SK-N-SH (cell line): ENCODE measurements at regions of chr2 and their contacts with region 1.

Region 1: GRCh38 chr2:235746257-235747084 is 252.6 kb downstream of the AGAP1 start:
- DNase-seq: peak; percentile 89
- H3K4me3 ChIP-seq: no peak overlapping the region; a peak in 1 of 4 replicates
- H3K27ac ChIP-seq: no peak overlapping the region
- H3K4me1 ChIP-seq: peaks cover 0 to 5% of the 10 kb centered on the region in 2 experiments; a peak in 1 of 4 replicates
- H3K27me3 ChIP-seq: no peaks in the 10 kb centered on the region
- CTCF ChIP-seq: peak; percentile 84
- EP300 ChIP-seq: no peak
- RAD21 ChIP-seq: peak; percentile 94

Region 2: DNA sequence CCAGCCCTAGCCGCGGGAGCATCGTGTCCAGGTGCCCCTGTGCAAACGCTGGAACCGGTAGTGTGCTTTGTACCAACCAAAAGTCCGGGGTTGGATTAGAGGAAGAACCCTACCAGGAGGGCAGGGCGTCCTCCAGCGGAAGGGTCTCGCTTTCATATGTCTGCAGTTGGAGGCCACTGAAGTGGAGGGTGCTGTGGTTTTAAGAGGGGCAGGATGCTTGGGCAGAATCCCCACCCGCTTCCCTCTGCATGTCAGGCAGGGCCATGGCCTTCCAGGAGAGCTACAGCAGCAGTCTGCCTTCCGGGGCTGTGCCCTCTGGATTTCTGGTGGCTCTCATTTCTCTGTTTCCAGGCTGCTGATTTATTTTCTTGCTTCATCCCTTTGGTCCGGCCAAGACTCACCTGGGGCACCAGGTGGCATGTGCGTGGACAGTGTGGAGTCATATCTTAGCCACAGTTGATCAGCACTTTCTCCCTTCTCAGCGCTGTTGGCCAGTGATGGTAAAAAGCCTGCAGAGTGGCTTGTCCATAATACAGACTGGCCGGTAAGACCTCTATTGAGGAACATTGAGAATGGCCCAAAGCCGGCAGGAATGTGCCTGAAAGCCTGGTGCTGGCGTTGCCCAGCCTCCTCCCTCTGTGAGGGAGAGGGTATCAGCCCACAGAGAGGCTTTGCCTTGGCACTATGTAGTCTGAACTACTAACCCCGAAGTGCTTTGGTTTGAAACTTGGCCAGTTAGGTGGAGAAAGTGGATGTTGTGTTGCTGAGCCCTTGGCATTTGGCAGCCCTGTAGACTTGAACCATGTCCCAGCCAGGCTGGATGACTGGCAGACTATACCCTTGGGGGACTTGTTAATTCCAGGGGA is 250.9 kb before region 1 on chr2:
- CTCF ChIA-PET with region 1: interaction called, 14 read pairs
- POLR2A ChIA-PET with region 1: no interaction called
- DNase-seq: no peak
- H3K4me3 ChIP-seq: peak overlapping the region; percentile 72 to 77
- H3K27ac ChIP-seq: no peak overlapping the region
- H3K4me1 ChIP-seq: peaks cover 13 to 28% of the 10 kb centered on the region in 2 experiments; a peak in 2 of 4 replicates
- H3K27me3 ChIP-seq: no peaks in the 10 kb centered on the region
- CTCF ChIP-seq: no peak
- EP300 ChIP-seq: no peak
- RAD21 ChIP-seq: no peak

Region 3: GRCh38 chr2:235595422-235596010 is 151.0 kb before region 1 on chr2:
- CTCF ChIA-PET with region 1: interaction called, 301 read pairs
- POLR2A ChIA-PET with region 1: interaction called, 5 read pairs
- DNase-seq: peak; percentile 83
- H3K4me3 ChIP-seq: no peak overlapping the region; a peak in 1 of 4 replicates
- H3K27ac ChIP-seq: no peak overlapping the region
- H3K4me1 ChIP-seq: peaks cover 0 to 4% of the 10 kb centered on the region in 2 experiments; a peak in 1 of 4 replicates
- H3K27me3 ChIP-seq: no peaks in the 10 kb centered on the region
- CTCF ChIP-seq: peak; percentile 90
- EP300 ChIP-seq: no peak
- RAD21 ChIP-seq: peak; percentile 96

Region 4: GRCh38 chr2:235639428-235639773 is 107.1 kb before region 1 on chr2:
- CTCF ChIA-PET with region 1: interaction called, 20 read pairs
- POLR2A ChIA-PET with region 1: interaction called, 3 read pairs
- DNase-seq: peak; percentile 73
- H3K4me3 ChIP-seq: no peak overlapping the region
- H3K27ac ChIP-seq: peak overlapping the region; percentile 27 to 87; a peak in 3 of 4 replicates
- H3K4me1 ChIP-seq: peaks cover 16 to 55% of the 10 kb centered on the region in 2 experiments
- H3K27me3 ChIP-seq: no peaks in the 10 kb centered on the region
- CTCF ChIP-seq: no peak
- EP300 ChIP-seq: no peak
- RAD21 ChIP-seq: 0 out of 2 replicates have a peak, but pooled peaks have one; percentile 12

Region 5: DNA sequence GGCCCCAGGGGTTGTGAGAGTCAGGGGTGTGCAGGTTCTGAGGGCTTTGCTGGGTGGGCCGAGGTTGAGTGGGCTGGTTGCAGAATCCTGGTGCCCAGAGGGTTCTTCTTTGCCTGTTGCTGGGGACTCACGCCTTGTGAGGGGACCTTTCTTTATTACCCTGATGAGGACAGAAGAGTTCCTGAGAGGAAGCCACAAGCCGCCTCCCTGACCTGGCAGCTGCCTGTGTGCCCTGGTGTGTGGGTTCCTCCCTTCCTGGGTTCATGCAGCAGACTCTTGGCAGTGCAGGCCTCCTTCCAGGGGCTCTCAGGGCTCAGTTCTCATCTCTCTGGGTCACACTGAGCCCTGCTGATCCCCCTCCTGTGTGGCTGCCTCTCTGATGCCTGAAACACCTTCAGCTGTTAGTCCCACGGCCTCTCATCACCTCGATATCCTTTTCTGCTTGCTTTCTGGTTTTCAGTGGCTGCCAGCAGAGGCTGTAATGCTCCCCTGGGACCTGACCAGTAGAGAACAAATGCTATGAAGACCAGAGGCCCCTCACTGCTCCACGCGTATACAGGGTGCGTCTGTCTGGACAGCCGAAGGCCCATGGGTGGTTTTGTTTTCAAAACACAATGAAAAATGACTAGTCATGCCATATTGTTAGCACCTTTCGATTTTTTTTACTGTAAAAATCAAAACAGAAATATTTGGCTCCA is 61.3 kb before region 1 on chr2:
- CTCF ChIA-PET with region 1: interaction called, 26 read pairs
- POLR2A ChIA-PET with region 1: no interaction called
- DNase-seq: no peak
- H3K4me3 ChIP-seq: no peak overlapping the region
- H3K27ac ChIP-seq: no peak overlapping the region
- H3K4me1 ChIP-seq: peaks cover 0 to 10% of the 10 kb centered on the region in 2 experiments; a peak in 1 of 4 replicates
- H3K27me3 ChIP-seq: no peaks in the 10 kb centered on the region
- CTCF ChIP-seq: no peak
- EP300 ChIP-seq: no peak
- RAD21 ChIP-seq: no peak

Region 6: DNA sequence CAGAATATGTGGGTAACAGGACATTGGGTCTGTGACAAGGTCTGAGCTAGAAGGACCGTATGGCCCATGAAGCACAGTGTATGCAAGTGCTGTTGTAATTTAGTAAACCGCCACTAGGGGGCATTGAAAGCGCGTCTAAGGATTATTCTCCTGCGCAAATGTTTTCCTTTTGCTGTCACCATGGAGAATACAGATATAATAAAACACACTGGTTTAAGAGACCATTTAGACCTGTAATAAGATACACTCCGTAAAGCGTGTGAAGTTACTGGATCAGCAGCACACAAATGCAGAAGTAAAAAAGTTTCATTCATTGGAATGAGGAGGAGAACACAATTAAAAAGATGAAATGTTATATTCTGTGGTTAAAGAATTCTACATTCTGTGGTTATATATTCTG is 19.8 kb after region 1 on chr2:
- CTCF ChIA-PET with region 1: interaction called, 22 read pairs
- POLR2A ChIA-PET with region 1: no interaction called
- DNase-seq: peak; percentile 81
- H3K4me3 ChIP-seq: no peak overlapping the region; a peak in 1 of 4 replicates
- H3K27ac ChIP-seq: peak overlapping the region in 1 of 2 experiments; percentile 43; a peak in 1 of 4 replicates
- H3K4me1 ChIP-seq: no peaks in the 10 kb centered on the region
- H3K27me3 ChIP-seq: no peaks in the 10 kb centered on the region
- CTCF ChIP-seq: peak; percentile 91
- EP300 ChIP-seq: no peak
- RAD21 ChIP-seq: peak; percentile 84